Activated T-helper 2 cell treated with anti-CD3 and anti-CD28 coated beads, Interferon-gamma antibody, Interleukin-2, Interleukin-4, amounts not matched to agents 10 μg/mL and 5 μg/mL and 100 μg/mL, durations not matched to agents 14 hours and 24 hours and 36 hours (primary cell): ENCODE measurements at regions of chr14 and their contacts with region 1.

Region 1: DNA sequence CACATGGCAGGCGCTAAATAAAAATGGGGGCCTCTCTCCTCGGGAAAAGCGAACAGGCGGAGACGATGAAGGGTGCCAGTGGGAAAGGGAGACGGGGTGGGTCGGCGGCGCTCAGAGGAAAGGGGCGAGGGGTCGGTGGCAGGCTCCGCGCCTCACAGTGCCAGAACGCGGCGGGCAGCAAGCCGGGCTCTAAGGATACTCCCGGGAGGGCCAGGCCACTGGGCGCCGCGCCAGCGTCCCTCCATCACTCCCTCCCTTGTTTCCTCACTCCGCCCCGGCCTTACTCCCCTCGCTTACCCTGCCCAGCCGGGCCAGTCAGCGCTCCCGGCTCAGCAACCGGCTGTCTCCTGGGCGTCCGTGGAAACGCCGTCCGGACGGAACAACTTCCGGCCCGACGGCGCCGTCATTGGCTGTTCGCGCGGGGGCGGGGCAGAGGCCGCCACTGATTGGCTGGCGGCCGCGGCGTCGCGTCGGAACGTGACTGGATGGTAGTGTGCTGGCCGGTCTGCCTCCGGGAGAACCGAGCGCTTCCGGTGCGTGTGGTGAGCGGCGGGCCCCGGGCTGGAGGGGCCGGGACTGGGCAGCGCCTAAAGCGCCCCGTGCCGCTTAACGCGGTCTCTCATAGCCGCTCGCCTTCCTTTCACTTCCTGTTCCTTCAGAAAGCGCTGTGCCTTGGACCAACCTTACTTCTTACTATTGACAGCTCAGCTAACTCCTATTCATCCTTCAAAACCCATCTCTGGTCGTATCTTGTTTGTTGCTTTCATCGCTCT is 53.0 kb downstream of the SLC25A47 start:
- DNase-seq: peak; percentile 92
- H3K4me3 Mint-ChIP-seq: peak within 1 kb of the TSS; percentile 95
- H3K27ac Mint-ChIP-seq: peak within 1 kb of the TSS; percentile 99
- H3K4me1 Mint-ChIP-seq: peaks cover 45% of the 10 kb centered on the region
- H3K27me3 Mint-ChIP-seq: no peaks in the 10 kb centered on the region

Region 2: GRCh38 chr14:100147181-100147631 is 228.9 kb before region 1 on chr14:
- intact Hi-C with region 1: no loop called
- DNase-seq: peak; percentile 38
- H3K4me3 Mint-ChIP-seq: no peak overlapping the region
- H3K27ac Mint-ChIP-seq: no peak overlapping the region
- H3K4me1 Mint-ChIP-seq: peaks cover 3% of the 10 kb centered on the region
- H3K27me3 Mint-ChIP-seq: no peaks in the 10 kb centered on the region

Region 3: DNA sequence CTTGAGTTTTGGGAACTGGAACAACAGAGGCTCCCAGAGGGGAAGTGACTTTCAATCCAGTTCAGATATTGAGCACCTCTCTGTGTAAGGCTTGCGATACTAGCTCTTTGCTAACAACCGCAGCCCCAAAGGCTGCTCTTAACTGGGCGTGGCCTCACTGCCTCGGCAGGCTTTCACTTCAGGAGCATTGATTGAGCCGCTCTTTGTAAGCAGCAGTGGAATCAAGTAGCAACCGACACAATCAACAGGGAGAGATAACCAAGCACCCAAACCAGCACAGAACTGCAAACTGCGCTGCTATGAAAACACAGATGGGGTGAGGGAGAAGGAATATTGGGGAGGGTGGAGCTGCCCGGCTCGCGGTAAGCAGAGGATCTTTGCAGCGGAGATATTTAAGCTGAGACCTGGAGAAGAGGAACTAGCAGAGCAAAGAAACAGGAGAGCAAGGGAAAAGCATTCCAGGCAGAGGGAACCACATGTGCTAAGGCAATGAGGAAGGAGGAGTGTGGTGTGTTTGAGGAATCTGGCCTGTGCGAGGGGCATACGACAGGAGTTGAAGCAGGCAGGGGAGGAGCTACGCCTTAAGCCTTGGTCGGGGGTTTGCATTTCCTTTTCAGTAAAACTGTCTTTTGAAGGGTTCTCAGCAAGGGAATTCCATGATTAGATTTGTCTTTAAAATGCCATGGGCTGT is 154.5 kb before region 1 on chr14:
- intact Hi-C with region 1: loop called (anchors 5 kb)
- DNase-seq: peak; percentile 68
- H3K4me3 Mint-ChIP-seq: no peak overlapping the region
- H3K27ac Mint-ChIP-seq: no peak overlapping the region
- H3K4me1 Mint-ChIP-seq: peaks cover 8% of the 10 kb centered on the region
- H3K27me3 Mint-ChIP-seq: no peaks in the 10 kb centered on the region

Region 4: DNA sequence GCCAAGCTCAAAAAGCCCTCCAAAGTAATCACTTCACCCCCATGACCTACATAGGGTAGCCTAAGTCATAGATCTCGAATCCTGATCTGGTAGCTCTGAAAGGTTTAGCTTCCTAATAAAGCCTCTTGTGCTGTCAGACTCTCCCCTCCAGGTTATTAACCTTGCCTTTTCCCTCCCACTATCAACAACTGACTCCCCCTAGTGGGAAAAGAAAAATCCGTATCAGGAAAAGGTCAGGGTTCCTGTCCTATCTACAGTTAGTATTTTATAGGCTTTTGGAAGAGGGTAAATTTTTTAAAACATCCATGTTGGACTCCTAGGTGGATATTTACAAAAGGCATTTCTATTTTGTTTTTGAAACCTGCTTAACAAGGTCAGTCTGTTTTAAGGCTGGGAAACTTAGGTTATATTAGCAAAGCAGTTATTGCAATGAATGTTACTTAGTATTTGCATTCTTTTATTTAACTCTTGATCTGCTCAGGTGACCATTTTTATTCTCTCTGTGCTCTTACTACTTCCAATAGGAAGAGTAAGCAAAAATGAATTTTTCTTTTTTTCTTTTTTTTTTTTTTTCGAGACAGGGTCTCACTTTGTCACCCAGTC is 129.2 kb before region 1 on chr14:
- intact Hi-C with region 1: no loop called
- DNase-seq: no peak
- H3K4me3 Mint-ChIP-seq: no peak overlapping the region
- H3K27ac Mint-ChIP-seq: no peak overlapping the region
- H3K4me1 Mint-ChIP-seq: peaks cover 48% of the 10 kb centered on the region
- H3K27me3 Mint-ChIP-seq: no peaks in the 10 kb centered on the region

Region 5: DNA sequence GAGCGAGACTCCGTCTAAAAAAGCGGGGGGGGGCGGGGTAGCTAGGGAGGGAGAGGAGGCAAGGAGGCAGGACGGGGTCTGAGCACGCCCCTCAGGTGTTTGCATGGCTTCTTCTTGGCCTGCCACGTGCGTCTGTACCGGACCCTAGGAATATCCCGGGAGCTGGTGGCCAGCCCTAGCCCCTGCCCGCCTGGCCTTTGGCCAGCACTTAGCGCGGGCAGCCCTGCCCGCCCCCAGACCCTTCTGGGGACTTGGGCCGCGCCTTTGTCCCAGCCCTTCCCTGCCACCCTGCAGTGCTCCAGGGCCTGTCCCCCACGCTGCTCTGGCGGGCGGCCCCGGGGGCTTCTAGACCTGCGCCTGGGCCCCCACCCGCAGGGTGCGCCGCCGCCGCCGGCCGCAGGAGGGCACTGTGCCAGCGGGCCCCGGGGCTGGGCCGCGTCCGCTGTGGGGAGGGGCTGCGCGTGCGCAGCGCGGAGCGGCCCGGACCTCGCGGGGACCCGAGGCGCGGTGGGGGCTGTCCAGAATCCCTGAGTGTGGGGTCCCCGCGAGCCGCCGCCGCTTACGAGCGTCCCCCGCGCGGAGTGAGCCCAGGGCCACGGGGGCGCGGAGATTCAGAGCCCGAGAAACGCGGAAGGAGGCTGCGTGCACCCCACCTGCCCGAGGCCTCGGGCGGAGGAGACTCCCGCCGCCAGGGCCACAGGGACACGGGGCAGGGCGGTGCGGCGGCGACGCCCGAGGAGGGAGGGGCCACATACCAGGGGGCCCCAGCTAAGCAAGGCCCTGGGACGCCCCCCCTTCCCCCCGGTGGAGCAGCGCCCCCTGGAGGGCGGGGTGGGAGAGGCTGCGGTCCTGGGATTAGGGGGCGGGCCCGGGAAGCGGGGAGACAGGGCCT is 90.9 kb before region 1 on chr14:
- intact Hi-C with region 1: loop called (anchors 1 kb)
- DNase-seq: peak; percentile 72
- H3K4me3 Mint-ChIP-seq: no peak overlapping the region
- H3K27ac Mint-ChIP-seq: no peak overlapping the region
- H3K4me1 Mint-ChIP-seq: peaks cover 8% of the 10 kb centered on the region
- H3K27me3 Mint-ChIP-seq: no peaks in the 10 kb centered on the region

Region 6: DNA sequence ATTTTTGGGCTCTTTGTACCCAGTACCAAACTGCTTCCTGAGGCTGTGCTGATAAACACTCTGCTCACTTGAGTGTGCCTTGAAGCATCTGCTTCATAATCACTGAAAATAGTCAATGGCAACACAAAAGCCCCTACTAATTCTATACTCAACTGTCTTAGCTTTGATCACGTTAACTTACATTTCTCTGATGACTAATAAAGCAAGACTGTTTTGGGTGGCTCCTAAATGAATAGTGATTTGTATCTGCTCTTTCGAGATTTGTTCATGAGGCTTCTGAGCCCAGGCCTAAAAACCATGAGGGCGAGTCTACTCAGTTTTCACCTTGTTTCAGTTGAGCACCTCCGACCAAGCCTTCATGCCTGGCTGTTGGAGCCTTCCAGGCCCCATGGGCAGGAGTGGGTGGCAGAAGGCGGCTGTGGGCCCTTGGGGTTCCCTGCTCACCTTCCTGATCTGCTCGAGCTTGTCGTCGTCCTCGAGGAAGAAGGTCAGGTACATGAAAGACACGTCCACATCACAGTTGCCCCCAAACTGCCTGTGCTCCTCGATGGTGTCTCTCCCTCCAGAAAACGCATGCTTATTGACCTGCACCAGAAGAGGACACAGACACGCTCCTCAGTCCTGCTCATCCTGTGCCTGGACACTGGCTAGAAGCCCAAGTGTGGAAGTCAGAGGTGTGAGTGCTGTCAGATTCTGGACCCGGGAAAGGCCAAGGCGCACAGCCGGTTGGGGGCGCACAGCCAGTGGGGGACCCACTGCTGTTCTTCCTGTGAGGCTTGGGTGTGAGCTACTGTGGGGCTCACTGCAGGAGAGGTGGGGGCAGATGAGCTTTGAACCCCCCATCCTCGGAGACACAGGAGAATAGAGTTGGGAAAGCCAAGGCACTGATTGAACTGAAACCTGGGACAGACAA is 39.3 kb before region 1 on chr14:
- intact Hi-C with region 1: loop called (anchors 2 kb)
- DNase-seq: no peak
- H3K4me3 Mint-ChIP-seq: no peak overlapping the region
- H3K27ac Mint-ChIP-seq: peak overlapping the region; percentile 88
- H3K4me1 Mint-ChIP-seq: peaks cover 31% of the 10 kb centered on the region
- H3K27me3 Mint-ChIP-seq: no peaks in the 10 kb centered on the region

Region 7: GRCh38 chr14:100359881-100360280 is 16.3 kb before region 1 on chr14:
- intact Hi-C with region 1: no loop called
- DNase-seq: no peak
- H3K4me3 Mint-ChIP-seq: no peak overlapping the region
- H3K27ac Mint-ChIP-seq: no peak overlapping the region
- H3K4me1 Mint-ChIP-seq: peaks cover 32% of the 10 kb centered on the region
- H3K27me3 Mint-ChIP-seq: no peaks in the 10 kb centered on the region